ENCODE measurements at regions of chr9 and their contacts with region 1.

Region 1: GRCh38 chr9:128786681-128787601 is at the start of gene TBC1D13:
- DNase-seq: peak; percentile 81 to 98 (median 89)

Region 2: DNA sequence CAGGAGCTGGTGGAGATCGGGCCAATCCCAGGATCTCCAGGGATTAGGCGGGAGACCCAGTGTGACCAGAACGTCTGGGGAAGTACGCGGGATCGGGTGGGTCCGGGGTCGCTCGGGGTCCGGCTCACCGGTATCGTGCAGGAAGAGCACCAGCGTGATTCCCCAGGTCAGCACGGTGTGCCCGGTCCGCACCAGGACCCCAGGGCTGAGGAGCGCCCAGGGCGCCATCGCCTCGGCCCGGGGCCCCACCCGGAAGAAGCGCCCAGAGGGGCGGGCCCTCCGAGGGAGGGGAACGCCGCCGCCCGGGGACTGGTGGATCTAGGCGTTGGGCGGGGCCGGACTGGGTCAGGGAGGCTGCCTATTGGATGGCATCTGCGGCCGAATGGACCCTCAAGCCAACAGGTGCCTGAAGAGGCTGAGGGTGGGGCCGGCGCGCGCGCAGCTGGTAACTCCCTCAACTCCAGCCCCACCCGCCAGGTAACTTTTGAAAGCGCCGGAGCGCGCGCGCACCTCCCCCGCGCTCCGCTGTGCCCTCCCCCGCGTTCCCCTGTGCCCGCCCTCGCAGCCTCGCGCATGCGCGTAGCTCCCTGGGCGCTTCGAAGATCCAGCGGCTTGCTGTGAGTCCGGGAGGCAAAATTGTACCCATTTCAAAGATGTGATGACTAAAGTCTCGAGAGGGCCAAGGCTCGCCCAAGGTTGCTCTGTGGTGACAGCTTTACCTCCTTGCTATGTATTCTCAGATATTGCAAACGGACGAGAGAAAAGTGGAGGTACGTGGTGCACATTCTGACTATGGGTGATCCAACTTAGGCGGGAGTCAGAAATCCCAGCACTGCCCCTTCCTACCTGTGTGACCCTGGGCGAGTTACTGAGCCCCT is 62.8 kb before region 1 on chr9 and contains the start of gene ZDHHC12:
- intact Hi-C with region 1: loop called (anchors 10 kb)
- DNase-seq: peak; percentile 79 to 99 (median 91)

Region 3: GRCh38 chr9:128771745-128772519 is 15.0 kb before region 1 on chr9 and contains the start of gene ZER1:
- intact Hi-C with region 1: loop called (anchors 1 kb)
- DNase-seq: peak; percentile 89 to 99 (median 94)

Region 4: GRCh38 chr9:128921881-128922763 is 135.2 kb after region 1 on chr9:
- intact Hi-C with region 1: no loop called
- DNase-seq: peak in 1 of 10 donors; percentile 75

Measured in posterior cingulate gyrus (tissue), 11 donors.